ENCODE measurements at regions of chr9 and their contacts with region 1.

Region 1: GRCh38 chr9:5459289-5459829 is 9.0 kb downstream of the CD274 start:
- DNase-seq: peak; percentile 75
- H3K4me3 Mint-ChIP-seq: peak overlapping the region; percentile 81
- H3K27ac Mint-ChIP-seq: peak overlapping the region; percentile 85
- H3K4me1 Mint-ChIP-seq: peaks cover 58% of the 10 kb centered on the region
- H3K27me3 Mint-ChIP-seq: no peaks in the 10 kb centered on the region

Region 2: GRCh38 chr9:5392285-5392684 is 67.1 kb before region 1 on chr9:
- intact Hi-C with region 1: no loop called
- DNase-seq: no peak
- H3K4me3 Mint-ChIP-seq: no peak overlapping the region
- H3K27ac Mint-ChIP-seq: no peak overlapping the region
- H3K4me1 Mint-ChIP-seq: peaks cover 17% of the 10 kb centered on the region
- H3K27me3 Mint-ChIP-seq: no peaks in the 10 kb centered on the region

Region 3: DNA sequence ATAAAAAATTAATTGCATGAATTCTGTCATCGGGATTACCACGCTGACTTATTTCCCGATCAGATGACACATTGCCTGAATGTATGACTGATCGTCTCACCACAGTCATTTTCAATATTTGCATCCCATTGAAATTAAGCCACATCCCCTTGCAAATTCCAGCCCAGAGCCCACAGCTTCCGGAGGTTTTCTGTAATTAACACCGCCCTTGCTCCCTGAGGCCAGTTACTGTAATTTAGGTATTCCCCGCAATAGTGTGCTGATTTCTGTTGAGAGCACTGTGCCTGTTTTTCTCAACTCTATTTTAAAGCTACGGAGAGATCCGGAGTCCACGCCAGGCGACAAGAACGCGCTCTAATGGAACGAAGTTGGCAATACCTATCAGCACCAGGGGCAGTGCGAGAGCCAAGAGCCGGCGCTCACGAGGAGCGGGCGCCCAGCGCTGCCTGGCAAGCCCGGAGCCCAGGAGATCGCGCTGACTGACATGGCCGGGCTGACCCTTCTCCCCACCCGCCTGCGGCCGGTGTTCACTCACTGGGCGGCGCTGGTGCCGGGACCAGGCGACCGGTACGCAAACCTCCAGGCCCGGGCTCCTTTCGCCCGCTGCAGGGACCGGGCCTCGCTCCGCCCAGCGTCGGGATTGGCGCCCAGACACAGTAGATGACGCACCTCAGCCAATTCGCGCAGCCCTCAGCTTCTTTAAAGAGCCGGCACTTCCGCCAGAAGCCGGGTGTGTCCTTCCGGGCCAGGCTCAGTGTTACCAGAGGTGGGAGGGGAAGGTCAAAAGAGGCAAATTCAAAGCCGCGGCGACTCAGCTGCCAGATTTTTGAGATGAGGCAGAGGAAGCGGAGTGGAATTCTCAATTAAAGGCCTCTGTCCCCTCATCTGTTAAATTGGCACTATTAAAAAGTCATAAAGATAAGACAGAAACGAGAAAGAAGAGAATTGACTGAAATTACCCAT is 21.8 kb before region 1 on chr9 and contains the start of gene PLGRKT:
- intact Hi-C with region 1: loop called (anchors 1 kb)
- DNase-seq: peak; percentile 97
- H3K4me3 Mint-ChIP-seq: peak within 1 kb of the TSS; percentile 93
- H3K27ac Mint-ChIP-seq: peak within 1 kb of the TSS; percentile 97
- H3K4me1 Mint-ChIP-seq: peaks cover 52% of the 10 kb centered on the region
- H3K27me3 Mint-ChIP-seq: no peaks in the 10 kb centered on the region
- total RNA-seq, gene PLGRKT: 53.0 and 54.4 TPM in 2 replicates

Region 4: GRCh38 chr9:5510360-5510931 is 51.1 kb after region 1 on chr9 and contains the start of gene PDCD1LG2:
- intact Hi-C with region 1: loop called (anchors 1 kb)
- DNase-seq: peak; percentile 83
- H3K4me3 Mint-ChIP-seq: peak within 1 kb of the TSS; percentile 85
- H3K27ac Mint-ChIP-seq: peak within 1 kb of the TSS; percentile 96
- H3K4me1 Mint-ChIP-seq: peaks cover 53% of the 10 kb centered on the region
- H3K27me3 Mint-ChIP-seq: peaks cover 2% of the 10 kb centered on the region
- total RNA-seq, gene PDCD1LG2: 1.3 and 1.5 TPM in 2 replicates

Region 5: GRCh38 chr9:5582835-5583195 is 123.5 kb after region 1 on chr9:
- intact Hi-C with region 1: loop called (anchors 1 kb)
- DNase-seq: peak; percentile 88
- H3K4me3 Mint-ChIP-seq: peak overlapping the region; percentile 40
- H3K27ac Mint-ChIP-seq: peak overlapping the region; percentile 92
- H3K4me1 Mint-ChIP-seq: peaks cover 69% of the 10 kb centered on the region
- H3K27me3 Mint-ChIP-seq: no peaks in the 10 kb centered on the region

Region 6: DNA sequence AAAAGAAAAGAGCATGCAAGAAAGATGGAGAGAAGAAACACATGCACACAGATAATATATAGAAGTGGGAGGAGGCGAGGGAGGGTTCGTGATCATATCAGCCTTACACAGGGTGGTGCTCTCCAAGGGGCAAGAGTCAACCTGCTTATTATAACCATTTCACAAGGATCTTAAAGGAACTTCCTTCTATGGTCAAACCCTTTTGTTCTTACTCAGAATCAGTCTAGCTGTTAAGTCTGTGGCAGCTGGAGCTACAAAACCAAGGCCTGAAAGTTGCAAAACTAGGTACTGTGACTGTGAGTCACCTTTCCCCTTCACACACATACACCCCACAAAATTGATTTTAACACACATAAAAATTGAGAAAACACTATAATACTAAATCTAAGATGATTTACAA is 392.1 kb after region 1 on chr9:
- intact Hi-C with region 1: loop called (anchors 5 kb)
- DNase-seq: peak; percentile 84
- H3K4me3 Mint-ChIP-seq: peak overlapping the region; percentile 48
- H3K27ac Mint-ChIP-seq: peak overlapping the region; percentile 67
- H3K4me1 Mint-ChIP-seq: peaks cover 55% of the 10 kb centered on the region
- H3K27me3 Mint-ChIP-seq: no peaks in the 10 kb centered on the region